ENCODE measurements at regions of chr9 and their contacts with region 1.

Region 1: GRCh38 chr9:126939821-126940221 is 25.2 kb downstream of the RALGPS1 start:
- DNase-seq: peak; percentile 42 to 76 (median 68)
- ATAC-seq: peak; percentile 80
- H3K4me3 ChIP-seq: no peak overlapping the region
- H3K27ac ChIP-seq: peak overlapping the region; percentile 47 to 78 (median 59)
- H3K4me1 ChIP-seq: peaks cover 10% of the 10 kb centered on the region
- H3K27me3 ChIP-seq: no peaks in the 10 kb centered on the region
- CTCF ChIP-seq: peak in 1 of 7 experiments; percentile 4
- POLR2A ChIP-seq: peak in 2 of 3 donors; percentile 12 to 24

Region 2: GRCh38 chr9:126874546-126875311 is 65.1 kb before region 1 on chr9:
- intact Hi-C with region 1: no loop called
- DNase-seq: no peak
- ATAC-seq: no peak
- H3K4me3 ChIP-seq: no peak overlapping the region
- H3K27ac ChIP-seq: no peak overlapping the region
- H3K4me1 ChIP-seq: no peaks in the 10 kb centered on the region
- H3K27me3 ChIP-seq: no peaks in the 10 kb centered on the region
- CTCF ChIP-seq: no peak
- POLR2A ChIP-seq: no peak

Region 3: DNA sequence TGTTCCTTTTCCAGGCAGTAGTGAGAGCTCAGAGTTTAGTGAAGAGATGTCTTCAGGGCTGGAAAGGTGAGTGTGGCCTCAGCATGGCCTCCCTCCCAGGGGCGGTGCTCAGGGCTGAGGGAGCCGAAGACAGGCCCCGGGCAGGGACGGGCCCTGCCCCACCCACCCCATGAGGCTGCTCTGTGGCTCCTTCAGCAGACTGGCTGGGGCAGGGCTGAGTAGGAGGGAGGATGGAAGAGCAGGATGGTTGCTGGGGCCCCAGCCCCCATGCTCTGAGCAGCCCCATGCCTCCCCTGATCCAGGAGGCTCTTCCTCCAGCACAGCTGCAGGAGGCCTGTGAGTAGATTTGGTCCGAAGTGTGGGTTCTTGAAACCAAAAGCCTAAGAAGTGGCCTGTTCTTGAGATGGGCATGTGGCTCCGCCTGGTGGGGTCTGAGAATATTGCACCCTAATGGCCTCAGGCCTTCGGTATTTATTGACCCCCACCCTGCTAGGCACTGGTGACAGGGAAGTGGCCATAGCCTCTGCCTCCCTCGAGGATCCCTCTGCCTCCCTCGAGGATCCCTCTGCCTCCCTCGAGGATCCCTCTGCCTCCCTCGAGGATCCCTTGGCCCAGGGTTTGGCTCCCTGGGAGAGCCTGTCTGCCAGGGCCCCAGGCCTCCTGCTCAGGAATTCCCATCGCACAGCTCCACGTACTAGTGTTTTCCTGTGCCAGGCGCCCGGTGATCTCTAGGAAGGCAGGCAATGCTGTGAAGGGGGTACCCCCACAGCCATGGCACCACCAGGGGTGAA is 259.4 kb after region 1 on chr9:
- intact Hi-C with region 1: loop called (anchors 5 kb)
- DNase-seq: peak; percentile 68 to 84 (median 75)
- ATAC-seq: peak; percentile 71
- H3K4me3 ChIP-seq: no peak overlapping the region
- H3K27ac ChIP-seq: no peak overlapping the region
- H3K4me1 ChIP-seq: no peaks in the 10 kb centered on the region
- H3K27me3 ChIP-seq: no peaks in the 10 kb centered on the region
- CTCF ChIP-seq: peak; percentile 66 to 90 (median 80)
- POLR2A ChIP-seq: no peak